Sigmoid colon (tissue), 7 donors: ENCODE measurements at regions of chrX and their contacts with region 1.

Region 1: DNA sequence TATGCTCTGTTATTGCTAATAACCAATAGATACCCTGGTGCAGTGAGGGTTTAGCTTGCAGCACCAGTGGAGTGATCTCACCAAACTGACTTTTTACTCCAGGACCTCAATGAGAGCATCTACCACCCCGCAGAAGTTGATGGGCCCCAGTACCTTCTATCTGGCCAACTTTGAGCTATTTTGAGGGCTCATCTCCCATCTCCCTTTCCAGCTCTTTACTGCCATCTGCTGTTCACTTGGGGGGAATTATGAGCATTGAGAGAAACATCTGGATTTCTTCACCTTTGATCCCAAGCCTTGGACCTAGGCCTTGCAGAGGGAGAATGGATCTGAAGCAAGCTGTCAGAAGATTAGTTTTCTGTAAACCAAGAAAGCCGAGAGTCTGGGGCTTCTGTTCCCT is 143.6 kb downstream of the TMEM164 start:
- DNase-seq: no peak
- H3K4me3 ChIP-seq: no peak overlapping the region
- H3K27ac ChIP-seq: no peak overlapping the region
- H3K4me1 ChIP-seq: peaks cover 0 to 16% (median 0%) of the 10 kb centered on the region in 4 donors
- H3K27me3 ChIP-seq: no peaks in the 10 kb centered on the region
- CTCF ChIP-seq: peak; percentile 24 to 50 (median 33)
- EP300 ChIP-seq: no peak
- POLR2A ChIP-seq: no peak

Region 2: DNA sequence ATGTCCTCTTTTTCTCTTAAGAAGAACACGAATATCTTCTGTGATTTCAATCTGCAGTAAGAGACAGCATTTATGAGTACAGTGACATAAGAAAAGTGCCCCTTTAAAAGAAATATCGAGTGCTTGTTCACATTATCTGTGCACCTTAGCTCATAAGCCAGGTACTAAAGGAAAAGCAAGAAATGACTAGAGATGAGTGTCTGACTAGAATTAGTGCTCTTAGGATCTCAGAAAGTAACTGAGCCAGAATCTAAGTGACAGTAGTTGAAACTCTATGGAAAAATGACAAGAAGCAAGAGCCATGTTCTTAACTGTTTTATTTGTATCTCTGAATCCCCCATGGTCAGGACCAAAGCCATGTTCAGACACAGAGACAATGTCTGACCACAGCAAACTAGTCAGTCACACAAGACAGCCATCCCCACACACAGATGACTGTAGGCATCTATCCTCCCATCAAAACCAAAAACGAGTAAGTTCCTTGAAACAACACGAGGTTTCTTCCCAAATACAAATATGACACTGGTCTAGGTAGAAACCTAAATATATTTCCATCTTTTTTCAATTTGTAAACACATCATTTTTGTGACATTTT is 450.3 kb before region 1 on chrX:
- intact Hi-C with region 1: no loop called
- DNase-seq: no peak
- H3K4me3 ChIP-seq: no peak overlapping the region
- H3K27ac ChIP-seq: no peak overlapping the region
- H3K4me1 ChIP-seq: no peaks in the 10 kb centered on the region
- H3K27me3 ChIP-seq: no peaks in the 10 kb centered on the region
- CTCF ChIP-seq: no peak
- EP300 ChIP-seq: no peak
- POLR2A ChIP-seq: no peak

Region 3: GRCh38 chrX:109911046-109911445 is 235.5 kb before region 1 on chrX:
- intact Hi-C with region 1: loop called (anchors 5 kb)
- DNase-seq: no peak
- H3K4me3 ChIP-seq: no peak overlapping the region
- H3K27ac ChIP-seq: no peak overlapping the region
- H3K4me1 ChIP-seq: no peaks in the 10 kb centered on the region
- H3K27me3 ChIP-seq: no peaks in the 10 kb centered on the region
- CTCF ChIP-seq: peak in 1 of 4 experiments; percentile 42
- EP300 ChIP-seq: no peak
- POLR2A ChIP-seq: no peak